Activated B cell treated with CpG ODN at 0.5 μM for 24 hours (primary cell): ENCODE measurements at regions of chr17 and their contacts with region 1.

Region 1: GRCh38 chr17:66191593-66192382 is at the start of gene CEP112:
- DNase-seq: peak; percentile 82
- ATAC-seq: peak; percentile 76
- H3K4me3 Mint-ChIP-seq: peak within 1 kb of the TSS; percentile 85
- H3K27ac Mint-ChIP-seq: peak within 1 kb of the TSS; percentile 80
- H3K4me1 Mint-ChIP-seq: peaks cover 34% of the 10 kb centered on the region
- H3K27me3 Mint-ChIP-seq: peaks cover 4% of the 10 kb centered on the region
- CTCF ChIP-seq: no peak
- total RNA-seq, gene CEP112: 3.8 and 3.9 TPM in 2 replicates

Region 2: GRCh38 chr17:65561394-65562205 is 630.2 kb before region 1 on chr17 and contains the start of gene AXIN2:
- CTCF ChIA-PET with region 1: no interaction called
- POLR2A ChIA-PET with region 1: no interaction called
- intact Hi-C with region 1: loop called (anchors 2 kb)
- DNase-seq: peak; percentile 64
- ATAC-seq: peak; percentile 93
- H3K4me3 Mint-ChIP-seq: peak within 1 kb of the TSS; percentile 82
- H3K27ac Mint-ChIP-seq: no peak within 1 kb of the TSS
- H3K4me1 Mint-ChIP-seq: peaks cover 12% of the 10 kb centered on the region
- H3K27me3 Mint-ChIP-seq: peaks cover 21% of the 10 kb centered on the region
- CTCF ChIP-seq: no peak
- total RNA-seq, gene AXIN2: 0.17 and 0.27 TPM in 2 replicates

Region 3: GRCh38 chr17:65914784-65915350 is 276.9 kb before region 1 on chr17:
- CTCF ChIA-PET with region 1: no interaction called
- POLR2A ChIA-PET with region 1: no interaction called
- intact Hi-C with region 1: loop called (anchors 5 kb)
- DNase-seq: no peak
- ATAC-seq: peak; percentile 96
- H3K4me3 Mint-ChIP-seq: peak overlapping the region; percentile 8
- H3K27ac Mint-ChIP-seq: peak overlapping the region; percentile 42
- H3K4me1 Mint-ChIP-seq: peaks cover 13% of the 10 kb centered on the region
- H3K27me3 Mint-ChIP-seq: no peaks in the 10 kb centered on the region
- CTCF ChIP-seq: no peak

Region 4: GRCh38 chr17:66301797-66302741 is 110.3 kb after region 1 on chr17 and contains the start of gene PRKCA:
- CTCF ChIA-PET with region 1: no interaction called
- POLR2A ChIA-PET with region 1: no interaction called
- intact Hi-C with region 1: loop called (anchors 2 kb)
- DNase-seq: peak; percentile 68
- ATAC-seq: peak; percentile 85
- H3K4me3 Mint-ChIP-seq: peak within 1 kb of the TSS; percentile 90
- H3K27ac Mint-ChIP-seq: peak within 1 kb of the TSS; percentile 42
- H3K4me1 Mint-ChIP-seq: peaks cover 11% of the 10 kb centered on the region
- H3K27me3 Mint-ChIP-seq: peaks cover 24% of the 10 kb centered on the region
- CTCF ChIP-seq: no peak
- total RNA-seq, gene PRKCA: 1.4 and 2.2 TPM in 2 replicates

Region 5: GRCh38 chr17:66364990-66365490 is 173.3 kb after region 1 on chr17:
- CTCF ChIA-PET with region 1: no interaction called
- POLR2A ChIA-PET with region 1: no interaction called
- intact Hi-C with region 1: no loop called
- DNase-seq: no peak
- ATAC-seq: no peak
- H3K4me3 Mint-ChIP-seq: no peak overlapping the region
- H3K27ac Mint-ChIP-seq: no peak overlapping the region
- H3K4me1 Mint-ChIP-seq: no peaks in the 10 kb centered on the region
- H3K27me3 Mint-ChIP-seq: peaks cover 3% of the 10 kb centered on the region
- CTCF ChIP-seq: no peak

Region 6: GRCh38 chr17:66441101-66441661 is 249.4 kb after region 1 on chr17:
- CTCF ChIA-PET with region 1: no interaction called
- POLR2A ChIA-PET with region 1: no interaction called
- intact Hi-C with region 1: loop called (anchors 10 kb)
- DNase-seq: no peak
- ATAC-seq: peak; percentile 85
- H3K4me3 Mint-ChIP-seq: peak overlapping the region; percentile 70
- H3K27ac Mint-ChIP-seq: peak overlapping the region; percentile 69
- H3K4me1 Mint-ChIP-seq: peaks cover 47% of the 10 kb centered on the region
- H3K27me3 Mint-ChIP-seq: no peaks in the 10 kb centered on the region
- CTCF ChIP-seq: no peak